BJ (cell line): ENCODE measurements at regions of chr3 and their contacts with region 1.

Region 1: GRCh38 chr3:86978111-86978558 is 12.8 kb downstream of the VGLL3 start:
- DNase-seq: peak; percentile 84
- H3K4me3 ChIP-seq: peak overlapping the region; percentile 9
- H3K27me3 ChIP-seq: no peaks in the 10 kb centered on the region
- CTCF ChIP-seq: no peak

Region 2: GRCh38 chr3:86826292-86826691 is 151.8 kb before region 1 on chr3:
- CTCF ChIA-PET with region 1: no interaction called
- POLR2A ChIA-PET with region 1: no interaction called
- DNase-seq: no peak
- H3K4me3 ChIP-seq: no peak overlapping the region
- H3K27me3 ChIP-seq: no peaks in the 10 kb centered on the region
- CTCF ChIP-seq: no peak

Region 3: DNA sequence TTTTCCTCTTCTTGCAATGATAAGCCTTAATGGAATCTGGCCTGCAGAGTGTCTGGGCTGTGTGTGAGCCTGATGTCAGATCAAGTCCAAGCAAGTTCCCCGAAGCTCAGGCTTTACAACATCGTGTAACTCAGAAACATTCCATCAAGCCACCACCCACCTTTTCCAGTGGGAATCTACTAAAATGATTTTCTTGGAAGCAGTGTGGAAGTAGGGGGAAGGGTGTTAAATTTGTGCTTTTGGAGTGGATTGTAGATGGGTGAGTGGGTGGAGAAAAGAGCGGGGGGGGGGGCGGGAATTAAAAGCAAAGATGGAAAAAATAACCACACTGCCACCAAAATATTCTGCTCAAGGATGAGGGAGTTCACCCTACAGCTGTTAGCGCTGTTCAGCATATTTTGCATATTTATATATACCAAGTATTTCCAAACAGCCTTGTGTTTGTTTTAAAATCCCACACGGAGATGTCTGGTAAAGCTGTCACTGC is 40.8 kb before region 1 on chr3:
- CTCF ChIA-PET with region 1: interaction called, 5 read pairs
- POLR2A ChIA-PET with region 1: interaction called, 16 read pairs
- DNase-seq: peak; percentile 95
- H3K4me3 ChIP-seq: no peak overlapping the region
- H3K27me3 ChIP-seq: no peaks in the 10 kb centered on the region
- CTCF ChIP-seq: no peak